Right ventricle myocardium superior (tissue), 1 donor: ENCODE measurements at regions of chr17 and their contacts with region 1.

Region 1: DNA sequence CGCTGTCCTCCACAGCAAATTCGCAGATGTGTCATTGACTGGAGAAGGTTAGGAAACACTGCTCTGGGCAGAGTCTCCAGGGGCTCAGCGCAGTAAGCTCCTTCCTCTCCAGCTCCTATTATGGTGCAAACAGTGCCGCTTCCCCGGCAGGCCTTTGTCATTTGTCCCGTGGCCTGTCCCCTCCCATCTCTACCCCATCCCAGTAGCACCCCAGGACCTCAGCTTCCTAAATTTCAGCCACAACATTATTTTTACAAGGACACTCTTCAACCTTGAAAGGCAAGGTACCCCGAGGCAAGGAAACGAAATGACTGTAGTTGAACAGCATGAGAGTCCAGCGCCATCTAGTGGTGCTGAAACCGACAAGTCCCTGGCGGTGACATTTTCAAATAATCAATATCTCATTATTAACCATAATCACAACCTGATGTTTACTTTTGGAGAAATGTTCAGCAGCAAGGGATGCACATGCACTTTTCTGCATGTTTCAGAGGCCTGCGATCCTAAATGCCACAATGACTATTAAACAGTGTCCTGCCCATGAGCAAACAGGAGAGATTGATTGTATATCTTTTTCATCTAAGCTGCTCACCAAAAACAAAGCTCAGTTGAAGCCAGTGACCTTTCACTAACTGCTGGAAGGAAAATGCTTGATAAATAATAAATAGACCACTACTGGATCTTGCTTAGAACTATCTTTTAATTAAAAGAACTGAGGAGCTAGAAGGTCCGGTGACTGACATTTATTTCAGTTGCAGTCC is 16.5 kb downstream of the MRPS23 start:
- DNase-seq: peak; percentile 69
- ATAC-seq: peak; percentile 84

Region 2: GRCh38 chr17:57130761-57131461 is 702.4 kb before region 1 on chr17:
- intact Hi-C with region 1: loop called (anchors 5 kb)
- DNase-seq: peak; percentile 86
- ATAC-seq: peak; percentile 96

Region 3: DNA sequence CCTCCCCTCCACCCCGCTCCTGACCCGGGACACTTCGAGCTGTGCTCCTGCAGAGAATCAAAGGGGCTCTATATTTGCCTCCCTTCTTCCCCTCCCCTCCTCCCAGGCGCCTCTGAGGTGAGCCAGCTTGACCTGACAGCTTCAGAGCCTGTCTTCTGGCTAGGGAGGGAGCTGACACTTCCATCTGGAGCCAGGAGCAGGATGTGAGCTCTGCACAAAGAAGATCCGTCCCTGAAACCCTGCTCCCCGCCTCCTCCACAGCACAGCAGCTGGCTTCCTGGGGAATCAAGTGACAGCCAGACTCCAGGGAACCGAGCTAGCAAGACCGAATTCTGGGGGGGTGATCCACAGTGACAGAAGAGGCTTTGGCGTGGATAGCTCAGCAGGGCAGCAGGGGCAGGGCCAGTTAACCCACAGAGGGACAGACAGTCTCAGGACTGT is 125.5 kb before region 1 on chr17:
- intact Hi-C with region 1: no loop called
- DNase-seq: no peak
- ATAC-seq: peak; percentile 45

Region 4: GRCh38 chr17:57752031-57752905 is 81.1 kb before region 1 on chr17:
- intact Hi-C with region 1: no loop called
- DNase-seq: no peak
- ATAC-seq: no peak

Region 5: DNA sequence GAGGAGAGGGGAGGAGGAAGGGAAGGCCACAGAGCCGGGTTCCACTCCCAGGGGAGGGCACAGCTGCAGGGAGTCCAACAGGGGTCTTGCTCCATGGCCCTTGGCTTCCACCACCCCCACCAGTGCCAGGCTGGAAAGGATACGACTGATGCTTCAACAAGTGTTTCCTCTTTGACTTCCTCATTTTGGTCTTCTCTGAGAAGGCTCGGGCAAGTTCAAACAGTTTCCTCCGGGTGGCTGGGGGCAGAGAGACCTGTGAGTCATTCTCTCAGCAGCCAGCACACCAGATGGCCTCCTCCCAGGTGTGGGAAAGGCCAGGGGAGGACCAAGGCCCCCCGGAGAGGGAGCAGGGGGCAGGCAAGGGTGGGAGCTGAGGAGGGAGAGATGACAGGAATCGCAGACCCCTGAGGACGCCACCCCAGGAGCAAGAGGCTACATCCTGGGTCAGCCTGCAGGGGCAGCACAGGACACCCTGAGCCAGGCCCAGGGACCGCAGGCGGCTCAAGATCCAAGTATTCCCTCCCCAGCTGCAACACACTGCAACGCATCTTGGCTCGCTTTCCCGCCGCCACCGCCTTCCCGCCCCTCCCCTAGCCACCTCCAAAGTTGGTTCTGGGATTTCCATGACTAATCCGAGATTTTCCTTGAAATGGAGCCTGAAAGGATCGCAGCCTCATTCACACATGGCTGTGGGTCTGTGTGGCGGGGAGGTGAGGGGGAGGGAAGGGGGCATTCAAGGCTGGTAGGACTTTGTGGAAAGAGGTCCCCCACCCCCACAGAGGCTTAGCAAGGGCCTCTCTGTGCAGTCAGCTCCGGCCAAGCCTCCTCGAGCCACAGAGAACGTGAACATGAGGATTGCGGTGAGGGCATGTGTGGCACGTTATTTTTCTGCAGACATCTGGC is 34.9 kb after region 1 on chr17:
- intact Hi-C with region 1: no loop called
- DNase-seq: peak; percentile 89
- ATAC-seq: peak; percentile 89

Region 6: GRCh38 chr17:57939797-57940196 is 106.4 kb after region 1 on chr17:
- intact Hi-C with region 1: no loop called
- DNase-seq: peak; percentile 70
- ATAC-seq: no peak